ENCODE measurements at regions of chr18 and their contacts with region 1.

Region 1: DNA sequence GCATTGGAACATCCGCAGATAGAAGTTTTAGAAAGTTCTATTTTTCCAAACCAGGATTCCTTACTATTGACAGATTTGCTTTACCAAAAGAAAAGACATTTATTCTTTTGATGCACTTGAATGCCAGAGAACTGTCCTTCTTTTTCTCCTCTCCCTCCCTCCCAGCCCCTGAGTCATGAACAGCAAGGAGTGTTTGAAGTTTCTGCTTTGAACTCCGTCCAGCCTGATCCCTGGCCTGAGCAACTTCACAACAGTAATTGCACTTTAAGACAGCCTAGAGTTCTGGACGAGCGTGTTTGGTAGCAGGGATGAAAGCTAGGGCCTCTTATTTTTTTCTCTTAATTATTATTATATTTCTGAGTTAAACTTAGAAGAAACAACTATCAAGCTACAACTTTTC is 33.6 kb downstream of the APCDD1 start:
- DNase-seq: no peak
- ATAC-seq: no peak
- H3K4me3 ChIP-seq: no peak overlapping the region
- H3K27ac ChIP-seq: no peak overlapping the region
- H3K4me1 ChIP-seq: peaks cover 0 to 4% of the 10 kb centered on the region in 2 experiments; a peak in 1 of 4 replicates
- H3K27me3 ChIP-seq: peaks cover 9% of the 10 kb centered on the region; the same call in 1 of the 2 replicates
- CTCF ChIP-seq: no peak
- POLR2A ChIP-seq: no peak
- RAD21 ChIP-seq: no peak

Region 2: DNA sequence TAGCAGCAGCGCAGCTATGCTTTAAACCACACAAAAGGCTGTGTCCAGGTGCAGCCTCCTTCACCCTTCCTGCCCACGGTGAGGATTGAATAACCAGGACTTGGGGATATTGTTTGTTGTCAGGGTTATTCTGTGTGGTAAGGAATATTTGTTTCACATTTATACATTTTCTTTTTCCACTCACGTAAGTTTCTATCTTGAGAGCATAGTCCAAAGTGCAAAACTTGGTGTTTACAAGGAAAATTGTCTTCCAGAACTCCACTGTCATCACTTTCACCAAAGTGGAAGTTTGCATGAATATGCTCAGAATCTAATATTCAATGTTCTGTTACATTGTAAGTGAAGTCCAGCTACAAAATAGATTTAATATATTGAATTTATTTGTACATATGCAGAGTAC is 64.2 kb after region 1 on chr18:
- CTCF ChIA-PET with region 1: no interaction called
- POLR2A ChIA-PET with region 1: no interaction called
- RAD21 ChIA-PET with region 1: no interaction called
- intact Hi-C with region 1: loop called (anchors 5 kb)
- DNase-seq: no peak
- ATAC-seq: no peak
- H3K4me3 ChIP-seq: no peak overlapping the region
- H3K27ac ChIP-seq: no peak overlapping the region
- H3K4me1 ChIP-seq: no peaks in the 10 kb centered on the region
- H3K27me3 ChIP-seq: no peaks in the 10 kb centered on the region
- CTCF ChIP-seq: no peak
- POLR2A ChIP-seq: no peak
- RAD21 ChIP-seq: no peak